Sciatic nerve (tissue), 2 donors: ENCODE measurements at regions of chr15 and their contacts with region 1.

Region 1: DNA sequence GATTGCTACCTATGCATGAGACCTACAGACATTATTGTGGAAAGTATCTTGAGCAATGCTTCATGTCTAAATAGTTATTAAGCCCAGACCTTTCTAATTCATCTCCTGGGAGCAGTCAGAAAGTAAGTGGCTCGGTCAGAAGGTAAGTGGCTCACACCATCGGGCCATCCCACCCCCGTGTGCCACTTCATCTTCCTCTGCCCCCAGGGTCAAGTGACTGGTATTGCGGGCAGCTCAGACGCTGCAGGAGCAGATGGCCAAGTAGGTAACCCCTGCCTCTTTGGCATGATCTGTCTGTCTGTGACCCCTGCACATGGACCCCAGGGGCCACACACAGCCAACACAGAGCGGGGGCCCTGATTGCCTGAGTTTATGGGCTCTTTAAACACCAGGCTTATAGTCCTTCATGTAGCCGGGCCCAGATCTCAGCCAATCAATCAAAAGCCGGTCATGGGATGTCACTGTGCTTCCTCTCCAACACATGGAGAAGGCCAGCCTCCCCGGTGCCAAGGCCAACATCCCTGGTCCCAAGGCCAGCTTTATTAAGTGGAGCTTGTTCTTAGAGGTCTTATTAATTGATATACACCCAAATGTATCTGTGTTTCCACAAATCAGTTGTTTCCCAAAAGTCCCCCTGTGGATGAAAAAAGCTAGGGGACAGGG is 42.9 kb downstream of the LARP6 start:
- DNase-seq: no peak
- ATAC-seq: no peak

Region 2: GRCh38 chr15:70584838-70585706 is 226.0 kb before region 1 on chr15:
- intact Hi-C with region 1: no loop called
- DNase-seq: no peak
- ATAC-seq: peak; percentile 59

Region 3: DNA sequence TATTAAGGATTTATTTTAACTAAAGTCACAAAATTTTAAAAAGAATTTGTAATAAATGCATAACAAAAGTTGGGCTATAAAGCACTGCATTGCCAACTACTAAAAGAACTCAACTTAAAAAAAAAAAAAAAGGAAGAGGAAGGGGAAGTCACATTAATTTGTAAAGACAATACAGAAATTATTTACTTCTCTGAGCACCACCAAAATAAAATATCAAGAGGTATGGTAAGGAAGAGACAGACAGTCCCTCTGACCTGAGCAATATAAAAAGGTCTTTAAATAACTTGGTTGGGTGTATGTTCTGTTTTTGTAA is 131.2 kb before region 1 on chr15:
- intact Hi-C with region 1: loop called (anchors 5 kb)
- DNase-seq: no peak
- ATAC-seq: no peak

Region 4: GRCh38 chr15:72085979-72086697 is 1275.1 kb after region 1 on chr15:
- intact Hi-C with region 1: no loop called
- DNase-seq: no peak
- ATAC-seq: no peak